Stomach (tissue), 19 donors: ENCODE measurements at regions of chr1 and their contacts with region 1.

Region 1: GRCh38 chr1:23634842-23635651 is 56.6 kb upstream of the RPL11 start:
- DNase-seq: peak; percentile 62 to 87
- H3K4me3 ChIP-seq: peak overlapping the region; percentile 29 to 46 (median 38)
- H3K27ac ChIP-seq: peak overlapping the region in 4 of 5 donors; percentile 70 to 84 (median 74)
- H3K4me1 ChIP-seq: peaks cover 0 to 28% (median 16%) of the 10 kb centered on the region in 4 donors
- H3K27me3 ChIP-seq: no peaks in the 10 kb centered on the region
- CTCF ChIP-seq: peak in 6 of 7 experiments; percentile 75 to 97 (median 94)
- EP300 ChIP-seq: no peak
- POLR2A ChIP-seq: no peak

Region 2: DNA sequence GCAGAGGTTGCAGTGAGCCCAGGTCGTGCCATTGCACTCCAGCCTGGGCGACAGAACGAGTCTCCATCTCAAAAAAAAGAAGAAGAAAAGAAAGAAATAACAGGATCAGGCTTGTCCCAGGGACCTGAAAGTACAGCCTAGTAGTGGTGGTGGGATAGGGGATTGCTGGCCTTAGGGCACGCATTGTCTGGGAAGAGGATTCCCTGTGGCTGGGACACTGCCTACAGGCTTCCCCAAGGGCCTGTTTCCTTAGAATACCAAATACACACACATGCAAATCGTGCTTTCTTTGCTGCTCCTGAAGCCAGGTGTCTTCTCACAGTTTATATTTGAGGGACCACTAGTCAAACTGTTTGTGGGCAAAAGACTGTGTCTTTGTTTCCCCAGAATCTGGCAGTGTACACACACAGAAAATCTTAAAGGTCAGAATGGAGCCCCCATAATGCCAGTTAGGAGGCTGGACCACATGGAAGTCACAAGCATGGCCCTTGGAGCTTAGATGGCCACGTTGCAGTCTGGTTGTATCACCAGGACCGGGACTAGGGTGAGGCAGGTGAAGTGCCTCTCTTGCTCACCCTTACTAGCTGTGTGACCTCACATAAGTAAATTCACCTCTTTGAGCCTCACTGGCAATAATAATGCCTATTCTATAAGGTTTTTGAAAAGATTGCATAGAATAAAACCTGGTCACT is 138.4 kb before region 1 on chr1:
- intact Hi-C with region 1: loop called (anchors 5 kb)
- DNase-seq: no peak
- H3K4me3 ChIP-seq: no peak overlapping the region
- H3K27ac ChIP-seq: no peak overlapping the region
- H3K4me1 ChIP-seq: peaks cover 0 to 8% (median 3%) of the 10 kb centered on the region in 4 donors
- H3K27me3 ChIP-seq: no peaks in the 10 kb centered on the region
- CTCF ChIP-seq: no peak
- EP300 ChIP-seq: no peak
- POLR2A ChIP-seq: no peak

Region 3: GRCh38 chr1:23539698-23540266 is 95.3 kb before region 1 on chr1:
- intact Hi-C with region 1: loop called (anchors 2 kb)
- DNase-seq: peak; percentile 92 to 96
- H3K4me3 ChIP-seq: peak overlapping the region in 3 of 4 donors; percentile 1 to 28 (median 13)
- H3K27ac ChIP-seq: peak overlapping the region in 1 of 5 donors; percentile 34
- H3K4me1 ChIP-seq: peaks cover 5 to 15% (median 10%) of the 10 kb centered on the region in 4 donors
- H3K27me3 ChIP-seq: no peaks in the 10 kb centered on the region
- CTCF ChIP-seq: peak in 5 of 7 experiments; percentile 80 to 94 (median 87)
- EP300 ChIP-seq: no peak
- POLR2A ChIP-seq: no peak